CD4-positive, alpha-beta T cell (primary cell): ENCODE measurements at regions of chr11 and their contacts with region 1.

Region 1: DNA sequence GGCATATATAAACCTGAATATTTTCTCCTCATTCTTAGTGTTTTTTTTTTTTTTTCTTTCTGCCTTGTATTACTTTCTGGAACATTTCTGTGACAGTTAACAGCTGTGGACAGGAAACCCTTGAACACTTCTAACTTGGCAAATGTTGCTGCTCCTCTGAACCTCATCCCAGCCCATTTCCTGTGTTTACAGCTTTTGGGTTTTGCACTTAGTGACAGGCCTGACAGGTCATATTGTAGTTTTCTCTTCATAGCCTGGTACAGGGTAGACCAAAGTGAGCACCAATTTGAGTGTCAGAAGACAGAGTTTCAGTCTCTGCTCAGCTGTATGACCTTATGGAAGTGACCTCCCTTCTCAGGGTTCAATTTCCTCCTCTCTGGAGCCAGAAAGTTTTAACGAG is 91.6 kb downstream of the STIM1 start:
- DNase-seq: peak in 13 of 14 experiments; percentile 25 to 94 (median 42)
- ATAC-seq: peak; percentile 75
- H3K4me3 ChIP-seq: peak overlapping the region; percentile 39
- H3K4me3 Mint-ChIP-seq: peak overlapping the region; percentile 72
- H3K27ac ChIP-seq: peak overlapping the region; percentile 80 to 87
- H3K27ac Mint-ChIP-seq: peak overlapping the region; percentile 96
- H3K4me1 ChIP-seq: peaks cover 87% of the 10 kb centered on the region
- H3K4me1 Mint-ChIP-seq: peaks cover 95% of the 10 kb centered on the region
- H3K27me3 ChIP-seq: no peaks in the 10 kb centered on the region
- H3K27me3 Mint-ChIP-seq: no peaks in the 10 kb centered on the region
- CTCF ChIP-seq: no peak

Region 2: DNA sequence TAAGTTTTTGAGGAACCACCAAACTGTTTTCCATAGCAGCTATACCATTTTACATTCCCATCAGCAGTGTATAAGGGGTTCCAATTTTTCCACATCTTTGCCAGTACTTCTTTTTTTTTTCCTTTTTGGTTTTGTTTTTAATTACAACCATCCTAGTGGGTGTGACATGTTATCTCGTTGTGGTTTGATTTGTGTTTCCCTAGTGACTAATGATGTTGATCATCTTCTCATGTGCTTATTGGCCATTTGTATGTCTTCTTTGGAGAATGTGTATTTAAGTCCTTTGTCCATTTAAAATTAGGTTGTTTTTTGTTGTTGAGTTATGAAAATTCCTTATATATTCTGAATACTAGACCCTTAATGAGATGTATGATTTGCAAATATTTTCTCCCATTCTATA is 32.3 kb before region 1 on chr11:
- CTCF ChIA-PET with region 1: no interaction called
- POLR2A ChIA-PET with region 1: interaction called, 4 read pairs
- intact Hi-C with region 1: loop called in 1 of 2 experiments (anchors 5 kb)
- DNase-seq: peak in 3 of 14 experiments; percentile 66 to 70 (median 68)
- ATAC-seq: peak; percentile 55
- H3K4me3 ChIP-seq: no peak overlapping the region
- H3K4me3 Mint-ChIP-seq: peak overlapping the region; percentile 1
- H3K27ac ChIP-seq: no peak overlapping the region
- H3K27ac Mint-ChIP-seq: peak overlapping the region; percentile 46
- H3K4me1 ChIP-seq: peaks cover 49% of the 10 kb centered on the region
- H3K4me1 Mint-ChIP-seq: peaks cover 85% of the 10 kb centered on the region
- H3K27me3 ChIP-seq: no peaks in the 10 kb centered on the region
- H3K27me3 Mint-ChIP-seq: no peaks in the 10 kb centered on the region
- CTCF ChIP-seq: no peak

Region 3: DNA sequence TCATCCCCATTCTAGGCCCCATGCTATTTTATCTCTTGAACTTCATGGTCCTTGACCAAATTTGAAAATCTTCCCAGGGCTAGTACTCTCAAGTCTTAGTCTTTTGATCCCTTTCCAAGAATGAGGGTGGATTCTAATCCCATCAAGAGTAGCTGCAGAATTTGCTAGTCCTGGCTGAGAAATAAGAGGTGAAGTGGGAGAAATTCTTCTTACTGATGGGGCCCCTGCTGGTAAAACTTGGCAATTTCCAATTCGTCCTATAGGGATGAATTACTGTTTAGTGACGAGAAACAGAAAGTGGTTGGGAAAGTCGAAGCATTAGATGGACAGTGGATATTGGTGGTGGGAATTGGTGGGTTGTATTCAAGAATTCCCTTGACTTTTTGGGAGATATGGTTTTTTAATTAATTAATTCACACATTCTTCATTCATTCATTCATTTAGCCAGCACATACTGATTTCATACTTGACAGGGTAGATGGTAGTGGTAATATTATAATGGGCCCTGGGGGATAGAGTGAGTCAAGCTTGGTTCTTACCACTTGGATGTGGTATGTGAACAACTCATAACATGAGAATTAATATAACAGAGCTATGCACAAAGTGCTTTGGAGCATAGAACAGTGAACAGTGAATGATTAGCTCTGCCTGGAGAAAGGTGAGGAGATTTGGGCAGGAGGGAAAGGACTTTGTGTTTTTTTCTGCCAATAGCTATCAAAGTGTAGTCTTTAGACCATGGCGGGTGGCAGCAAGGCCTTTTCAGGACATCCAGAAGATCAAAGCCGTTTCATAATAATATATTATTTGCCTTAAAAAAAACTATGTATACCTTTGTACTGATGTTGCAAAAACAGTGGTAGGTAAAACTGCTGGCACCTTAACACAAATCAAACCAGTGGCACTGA is 12.2 kb after region 1 on chr11:
- CTCF ChIA-PET with region 1: interaction called, 3 read pairs
- POLR2A ChIA-PET with region 1: interaction called, 14 read pairs
- intact Hi-C with region 1: no loop called
- DNase-seq: peak in 1 of 14 experiments; percentile 23
- ATAC-seq: no peak
- H3K4me3 ChIP-seq: no peak overlapping the region
- H3K4me3 Mint-ChIP-seq: no peak overlapping the region
- H3K27ac ChIP-seq: no peak overlapping the region
- H3K27ac Mint-ChIP-seq: peak overlapping the region; percentile 0
- H3K4me1 ChIP-seq: peaks cover 20% of the 10 kb centered on the region
- H3K4me1 Mint-ChIP-seq: peaks cover 84% of the 10 kb centered on the region
- H3K27me3 ChIP-seq: no peaks in the 10 kb centered on the region
- H3K27me3 Mint-ChIP-seq: no peaks in the 10 kb centered on the region
- CTCF ChIP-seq: peak; percentile 23

Region 4: DNA sequence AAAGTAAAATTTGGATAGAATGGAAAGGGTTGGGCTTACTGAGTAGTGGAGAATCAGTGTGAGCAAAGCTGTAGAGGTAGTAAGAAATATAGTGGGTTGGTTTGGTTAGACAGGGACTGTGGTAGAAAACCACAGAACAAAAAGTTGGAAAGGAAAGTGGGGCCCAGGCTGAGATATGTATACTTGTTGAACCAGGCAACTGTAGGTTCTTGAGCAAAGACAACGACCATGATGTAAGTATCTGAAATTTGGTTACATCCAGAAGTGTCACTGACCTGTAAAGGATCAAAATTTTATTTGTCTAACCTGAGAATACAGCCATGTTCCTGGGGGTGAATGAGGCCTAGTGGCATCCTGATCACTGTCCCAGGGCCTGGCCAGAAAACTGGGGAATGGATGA is 22.6 kb after region 1 on chr11:
- CTCF ChIA-PET with region 1: no interaction called
- POLR2A ChIA-PET with region 1: interaction called, 15 read pairs
- intact Hi-C with region 1: loop called in 1 of 2 experiments (anchors 2 kb)
- DNase-seq: peak in 4 of 14 experiments; percentile 18 to 38 (median 23)
- ATAC-seq: peak; percentile 68
- H3K4me3 ChIP-seq: no peak overlapping the region
- H3K4me3 Mint-ChIP-seq: peak overlapping the region; percentile 10
- H3K27ac ChIP-seq: no peak overlapping the region
- H3K27ac Mint-ChIP-seq: peak overlapping the region; percentile 70
- H3K4me1 ChIP-seq: peaks cover 24% of the 10 kb centered on the region
- H3K4me1 Mint-ChIP-seq: peaks cover 81% of the 10 kb centered on the region
- H3K27me3 ChIP-seq: no peaks in the 10 kb centered on the region
- H3K27me3 Mint-ChIP-seq: no peaks in the 10 kb centered on the region
- CTCF ChIP-seq: no peak

Region 5: GRCh38 chr11:3984896-3985295 is 37.8 kb after region 1 on chr11:
- CTCF ChIA-PET with region 1: interaction called, 3 read pairs
- POLR2A ChIA-PET with region 1: interaction called, 12 read pairs
- intact Hi-C with region 1: loop called in 1 of 2 experiments (anchors 5 kb)
- DNase-seq: peak in 12 of 14 experiments; percentile 7 to 64 (median 34)
- ATAC-seq: peak; percentile 71
- H3K4me3 ChIP-seq: no peak overlapping the region
- H3K4me3 Mint-ChIP-seq: no peak overlapping the region
- H3K27ac ChIP-seq: no peak overlapping the region
- H3K27ac Mint-ChIP-seq: peak overlapping the region; percentile 79
- H3K4me1 ChIP-seq: peaks cover 26% of the 10 kb centered on the region
- H3K4me1 Mint-ChIP-seq: peaks cover 93% of the 10 kb centered on the region
- H3K27me3 ChIP-seq: no peaks in the 10 kb centered on the region
- H3K27me3 Mint-ChIP-seq: no peaks in the 10 kb centered on the region
- CTCF ChIP-seq: peak; percentile 42